ENCODE measurements at regions of chr6 and their contacts with region 1.

Region 1: DNA sequence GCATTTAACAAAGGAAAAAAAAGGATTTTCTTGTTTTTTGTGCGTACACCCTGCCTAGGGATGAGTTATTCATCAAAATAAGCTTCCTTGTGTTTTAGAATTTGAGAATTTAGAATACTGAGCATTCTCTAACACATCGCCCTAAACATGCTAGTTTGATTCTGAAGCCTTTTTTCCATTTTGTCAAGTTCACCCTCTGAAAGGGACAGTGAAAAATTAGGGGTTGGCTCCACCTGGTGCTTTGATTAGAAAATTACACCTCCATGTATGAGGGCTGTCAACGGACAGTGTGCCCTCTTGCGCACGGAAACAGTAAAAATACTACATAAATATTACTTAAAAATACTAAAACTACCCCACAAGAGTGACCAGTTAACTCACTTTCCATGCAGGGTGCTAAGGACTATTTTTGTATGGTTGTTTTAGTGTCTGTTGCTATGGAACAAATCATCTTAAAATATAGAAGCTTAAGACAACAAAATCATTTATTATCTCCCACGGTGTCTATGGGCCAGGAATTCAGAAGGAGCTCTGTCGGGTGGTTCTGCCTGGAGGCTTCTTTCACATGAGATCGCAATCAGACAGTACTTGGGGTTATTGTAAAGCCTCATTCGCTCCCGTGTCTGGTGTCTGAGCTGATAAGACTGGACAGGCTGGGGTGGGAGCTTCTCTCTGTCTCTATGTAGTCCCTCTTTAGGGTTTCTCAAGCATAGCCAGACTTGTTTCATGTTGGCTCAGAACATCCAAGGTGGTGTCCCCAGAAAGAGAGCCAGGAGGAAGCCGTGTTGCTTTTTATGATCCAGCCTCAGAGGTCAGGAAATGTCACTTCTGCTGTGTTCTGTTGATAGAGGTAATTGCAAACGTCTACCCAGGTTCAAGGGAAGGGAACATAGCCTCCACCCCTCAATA is 41.1 kb upstream of the TMEM170B start:
- DNase-seq: peak; percentile 92
- H3K4me3 ChIP-seq: no peak overlapping the region
- H3K27ac ChIP-seq: peak overlapping the region; percentile 42
- H3K4me1 ChIP-seq: peaks cover 5% of the 10 kb centered on the region
- H3K27me3 ChIP-seq: no peaks in the 10 kb centered on the region
- CTCF ChIP-seq: peak; percentile 67 to 71
- POLR2A ChIP-seq: no peak

Region 2: DNA sequence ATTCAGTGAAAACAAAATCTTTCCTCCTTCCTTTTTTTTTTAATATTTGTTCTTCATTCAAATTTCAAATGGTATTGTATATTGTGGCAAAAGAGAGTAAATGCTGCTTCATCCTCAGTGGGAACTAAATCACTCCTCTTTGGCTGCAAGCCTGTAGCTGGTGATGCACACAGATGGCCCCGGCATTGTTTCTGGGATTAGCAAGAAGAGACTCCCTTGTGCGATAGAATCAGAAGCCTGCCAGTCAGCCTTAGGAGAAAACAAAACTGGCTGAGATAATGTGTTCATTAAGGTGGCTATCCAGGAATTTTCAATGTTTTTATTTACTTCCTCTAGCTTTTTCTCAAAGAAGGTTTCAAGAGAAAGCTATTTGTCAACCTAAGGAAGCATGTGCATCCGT is 431.6 kb before region 1 on chr6:
- CTCF ChIA-PET with region 1: interaction called, 14 read pairs
- POLR2A ChIA-PET with region 1: no interaction called
- dilution Hi-C with region 1: no loop called
- intact Hi-C with region 1: loop called (anchors 1 kb)
- DNase-seq: no peak
- H3K4me3 ChIP-seq: no peak overlapping the region
- H3K27ac ChIP-seq: no peak overlapping the region
- H3K4me1 ChIP-seq: no peaks in the 10 kb centered on the region
- H3K27me3 ChIP-seq: peaks cover 0 to 3% of the 10 kb centered on the region in 2 experiments
- CTCF ChIP-seq: no peak
- POLR2A ChIP-seq: no peak

Region 3: DNA sequence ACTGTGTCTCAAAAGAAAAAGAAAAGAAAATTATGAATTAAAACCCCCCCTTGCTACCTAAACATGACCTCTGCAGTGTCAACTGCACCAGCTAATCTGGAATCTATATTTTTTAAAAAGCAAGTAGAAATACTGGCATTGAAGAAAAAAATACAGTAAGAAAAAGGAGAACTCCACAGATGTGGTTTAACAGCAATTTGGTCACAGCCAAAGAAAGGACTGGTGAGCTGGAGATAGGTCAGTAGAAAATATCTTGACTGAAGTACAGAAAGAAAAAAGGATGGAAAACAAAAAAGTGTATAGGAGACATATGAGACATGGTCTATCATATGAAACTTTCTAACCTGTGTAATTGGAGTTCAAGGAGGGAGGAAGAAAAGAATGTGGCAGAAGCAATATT is 340.8 kb before region 1 on chr6:
- CTCF ChIA-PET with region 1: interaction called, 11 read pairs
- POLR2A ChIA-PET with region 1: no interaction called
- dilution Hi-C with region 1: no loop called
- intact Hi-C with region 1: no loop called
- DNase-seq: no peak
- H3K4me3 ChIP-seq: no peak overlapping the region
- H3K27ac ChIP-seq: no peak overlapping the region
- H3K4me1 ChIP-seq: no peaks in the 10 kb centered on the region
- H3K27me3 ChIP-seq: no peaks in the 10 kb centered on the region
- CTCF ChIP-seq: no peak
- POLR2A ChIP-seq: no peak

Region 4: GRCh38 chr6:11212625-11213024 is 283.8 kb before region 1 on chr6:
- CTCF ChIA-PET with region 1: interaction called, 12 read pairs
- POLR2A ChIA-PET with region 1: no interaction called
- dilution Hi-C with region 1: no loop called
- intact Hi-C with region 1: no loop called
- DNase-seq: peak; percentile 71
- H3K4me3 ChIP-seq: no peak overlapping the region
- H3K27ac ChIP-seq: peak overlapping the region; percentile 77
- H3K4me1 ChIP-seq: peaks cover 95% of the 10 kb centered on the region
- H3K27me3 ChIP-seq: no peaks in the 10 kb centered on the region
- CTCF ChIP-seq: no peak
- POLR2A ChIP-seq: no peak

Region 5: DNA sequence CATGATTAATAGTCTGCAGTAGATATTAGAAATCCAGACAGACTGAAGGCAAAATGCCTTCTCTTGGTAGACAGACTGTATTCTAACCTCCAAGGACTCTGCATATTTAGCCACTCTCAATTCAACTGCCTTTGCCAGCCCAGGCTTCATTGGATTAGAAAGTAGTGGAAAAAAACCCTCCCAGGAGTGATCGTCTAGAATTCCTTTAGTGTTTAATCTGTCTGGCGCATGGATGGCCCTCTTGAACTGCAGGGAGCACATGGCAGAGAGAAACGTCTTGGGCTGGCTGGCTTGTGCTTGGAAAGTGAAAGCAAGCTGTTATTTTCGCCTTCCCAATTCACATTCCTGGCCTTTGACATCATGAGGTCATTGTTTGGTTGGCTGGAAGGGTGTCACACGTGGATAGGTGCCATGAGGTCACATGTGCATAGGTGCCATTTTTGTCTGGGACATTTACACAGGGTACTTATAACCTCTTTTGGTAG is 233.1 kb before region 1 on chr6:
- CTCF ChIA-PET with region 1: interaction called, 10 read pairs
- POLR2A ChIA-PET with region 1: no interaction called
- dilution Hi-C with region 1: no loop called
- intact Hi-C with region 1: no loop called
- DNase-seq: peak; percentile 86
- H3K4me3 ChIP-seq: no peak overlapping the region
- H3K27ac ChIP-seq: peak overlapping the region; percentile 67
- H3K4me1 ChIP-seq: peaks cover 19% of the 10 kb centered on the region
- H3K27me3 ChIP-seq: no peaks in the 10 kb centered on the region
- CTCF ChIP-seq: no peak
- POLR2A ChIP-seq: no peak

Region 6: DNA sequence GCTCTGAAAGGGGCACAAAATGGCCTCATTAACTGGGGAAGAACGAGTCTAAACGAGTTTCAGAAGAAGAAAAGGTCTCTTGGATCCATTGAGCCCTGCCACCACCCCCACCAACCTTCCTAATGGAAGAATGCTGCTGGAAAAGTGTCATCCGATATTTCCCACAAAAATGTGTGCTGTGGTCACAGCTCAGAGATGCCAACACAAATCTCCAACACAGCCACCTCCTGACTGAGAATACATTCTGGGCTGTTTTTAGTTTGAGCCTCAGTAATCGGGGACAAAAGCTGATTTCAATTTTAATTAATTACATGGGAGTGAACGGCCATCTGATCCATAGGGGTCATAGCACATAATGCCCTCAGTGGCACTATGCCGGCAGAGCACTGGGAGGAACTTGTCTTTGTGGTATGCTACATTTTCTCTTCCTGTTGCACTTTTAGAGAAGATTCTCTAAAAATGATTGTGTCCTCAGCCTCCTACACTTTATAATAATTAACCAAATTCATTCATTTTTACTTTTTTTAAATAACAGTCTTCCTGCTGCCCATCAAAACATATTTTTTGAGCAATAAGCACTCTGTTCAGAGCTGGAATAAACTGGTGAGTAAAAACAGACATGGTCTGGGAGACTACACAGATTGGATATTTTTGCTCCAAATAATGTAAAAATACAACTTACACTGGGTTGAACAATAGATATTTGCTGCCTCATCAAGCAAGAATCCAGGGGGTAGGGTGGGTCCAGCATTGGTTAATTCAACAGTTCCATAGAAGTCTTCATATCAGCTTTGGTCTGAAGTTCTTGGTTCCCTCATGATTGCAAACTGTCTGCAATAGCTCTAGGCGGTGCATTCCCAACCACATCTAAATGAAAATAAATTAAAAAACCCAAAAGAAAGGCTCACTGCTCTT is 102.4 kb before region 1 on chr6:
- CTCF ChIA-PET with region 1: no interaction called
- POLR2A ChIA-PET with region 1: no interaction called
- dilution Hi-C with region 1: no loop called
- intact Hi-C with region 1: no loop called
- DNase-seq: no peak
- H3K4me3 ChIP-seq: no peak overlapping the region
- H3K27ac ChIP-seq: no peak overlapping the region
- H3K4me1 ChIP-seq: peaks cover 28% of the 10 kb centered on the region
- H3K27me3 ChIP-seq: peaks cover 0 to 5% of the 10 kb centered on the region in 2 experiments
- CTCF ChIP-seq: no peak
- POLR2A ChIP-seq: no peak

Region 7: DNA sequence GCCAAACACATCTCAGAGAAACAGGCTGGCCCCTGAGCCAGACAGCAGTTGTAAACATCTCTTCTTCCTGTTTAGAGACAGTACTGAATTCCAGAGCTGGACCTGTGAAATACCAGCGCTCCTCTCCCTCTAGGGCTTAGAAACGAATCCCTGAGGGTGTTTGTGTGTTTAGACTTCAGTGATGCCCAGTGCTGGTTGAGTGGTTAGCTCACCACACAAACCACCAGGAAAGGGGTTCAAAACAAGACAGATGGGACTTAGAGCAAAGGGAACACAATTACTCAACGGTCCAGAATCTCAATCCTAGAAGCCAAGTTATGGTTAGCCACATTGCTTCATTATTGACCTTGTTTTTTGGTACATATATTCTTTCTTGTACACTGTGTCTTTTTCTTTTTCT is 67.5 kb before region 1 on chr6:
- CTCF ChIA-PET with region 1: interaction called, 5 read pairs
- POLR2A ChIA-PET with region 1: no interaction called
- dilution Hi-C with region 1: no loop called
- intact Hi-C with region 1: loop called (anchors 5 kb)
- DNase-seq: no peak
- H3K4me3 ChIP-seq: no peak overlapping the region
- H3K27ac ChIP-seq: peak overlapping the region; percentile 79
- H3K4me1 ChIP-seq: peaks cover 70% of the 10 kb centered on the region
- H3K27me3 ChIP-seq: no peaks in the 10 kb centered on the region
- CTCF ChIP-seq: no peak
- POLR2A ChIP-seq: no peak